CD4-positive, alpha-beta T cell (primary cell): ENCODE measurements at regions of chr3 and their contacts with region 1.

Region 1: GRCh38 chr3:179015551-179016020 is 56.0 kb downstream of the ZMAT3 start:
- DNase-seq: peak in 12 of 14 experiments; percentile 6 to 90 (median 58)
- ATAC-seq: peak; percentile 98
- H3K4me3 ChIP-seq: no peak overlapping the region
- H3K4me3 Mint-ChIP-seq: no peak overlapping the region
- H3K27ac ChIP-seq: no peak overlapping the region
- H3K27ac Mint-ChIP-seq: peak overlapping the region; percentile 31
- H3K4me1 ChIP-seq: peaks cover 4% of the 10 kb centered on the region
- H3K4me1 Mint-ChIP-seq: peaks cover 45% of the 10 kb centered on the region
- H3K27me3 ChIP-seq: no peaks in the 10 kb centered on the region
- H3K27me3 Mint-ChIP-seq: no peaks in the 10 kb centered on the region
- CTCF ChIP-seq: peak; percentile 88

Region 2: DNA sequence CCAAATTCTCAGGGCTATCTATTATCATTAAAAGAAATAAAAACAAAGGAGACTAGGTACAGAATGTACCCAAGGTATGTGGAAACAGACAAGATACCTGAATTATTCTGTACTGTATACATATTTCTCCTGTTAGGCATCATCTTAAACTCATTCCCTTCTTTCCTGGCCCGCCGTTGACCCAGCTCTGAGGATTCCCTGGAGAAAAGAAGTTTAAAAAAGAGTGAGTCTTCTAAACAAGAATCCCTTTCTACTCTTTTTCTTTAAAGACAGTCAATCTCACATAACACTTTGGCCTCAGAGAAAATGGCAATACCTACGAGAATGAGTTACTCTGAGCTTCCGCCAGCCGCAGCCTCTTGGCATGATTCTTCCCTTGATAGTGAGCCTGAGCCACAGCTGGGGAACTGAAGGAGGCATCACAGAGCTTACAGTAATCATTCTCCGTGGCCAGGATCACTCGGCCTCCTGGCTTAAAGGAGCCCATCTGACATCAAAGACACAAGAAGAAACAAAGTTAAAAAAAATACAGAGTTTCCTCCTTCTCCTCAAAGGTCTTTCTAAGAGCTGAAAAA is 11.8 kb after region 1 on chr3:
- CTCF ChIA-PET with region 1: interaction called, 8 read pairs
- POLR2A ChIA-PET with region 1: interaction called, 12 read pairs
- intact Hi-C with region 1: no loop called
- DNase-seq: peak in 6 of 14 experiments; percentile 6 to 45 (median 32)
- ATAC-seq: peak; percentile 77
- H3K4me3 ChIP-seq: no peak overlapping the region
- H3K4me3 Mint-ChIP-seq: peak overlapping the region; percentile 71
- H3K27ac ChIP-seq: peak overlapping the region; percentile 13 to 44
- H3K27ac Mint-ChIP-seq: peak overlapping the region; percentile 87
- H3K4me1 ChIP-seq: peaks cover 9% of the 10 kb centered on the region
- H3K4me1 Mint-ChIP-seq: peaks cover 28% of the 10 kb centered on the region
- H3K27me3 ChIP-seq: no peaks in the 10 kb centered on the region
- H3K27me3 Mint-ChIP-seq: no peaks in the 10 kb centered on the region
- CTCF ChIP-seq: no peak

Region 3: GRCh38 chr3:179071550-179072397 is 56.2 kb after region 1 on chr3 and contains the start of gene ZMAT3:
- CTCF ChIA-PET with region 1: interaction called, 4 read pairs
- POLR2A ChIA-PET with region 1: interaction called, 14 read pairs
- intact Hi-C with region 1: loop called (anchors 2 kb)
- DNase-seq: peak; percentile 72 to 94 (median 81)
- ATAC-seq: peak; percentile 81
- H3K4me3 ChIP-seq: peak within 1 kb of the TSS; percentile 78
- H3K4me3 Mint-ChIP-seq: peak within 1 kb of the TSS; percentile 99
- H3K27ac ChIP-seq: peak within 1 kb of the TSS; percentile 76 to 92
- H3K27ac Mint-ChIP-seq: peak within 1 kb of the TSS; percentile 86
- H3K4me1 ChIP-seq: peaks cover 30% of the 10 kb centered on the region
- H3K4me1 Mint-ChIP-seq: peaks cover 69% of the 10 kb centered on the region
- H3K27me3 ChIP-seq: no peaks in the 10 kb centered on the region
- H3K27me3 Mint-ChIP-seq: no peaks in the 10 kb centered on the region
- CTCF ChIP-seq: no peak
- total RNA-seq, gene ZMAT3: 10.2 to 13.0 TPM

Region 4: GRCh38 chr3:179196098-179196497 is 180.5 kb after region 1 on chr3:
- CTCF ChIA-PET with region 1: no interaction called
- POLR2A ChIA-PET with region 1: no interaction called
- intact Hi-C with region 1: loop called (anchors 10 kb)
- DNase-seq: peak in 4 of 14 experiments; percentile 9 to 72 (median 66)
- ATAC-seq: peak; percentile 85
- H3K4me3 ChIP-seq: no peak overlapping the region
- H3K4me3 Mint-ChIP-seq: peak overlapping the region; percentile 54
- H3K27ac ChIP-seq: no peak overlapping the region
- H3K27ac Mint-ChIP-seq: peak overlapping the region; percentile 81
- H3K4me1 ChIP-seq: peaks cover 13% of the 10 kb centered on the region
- H3K4me1 Mint-ChIP-seq: peaks cover 65% of the 10 kb centered on the region
- H3K27me3 ChIP-seq: no peaks in the 10 kb centered on the region
- H3K27me3 Mint-ChIP-seq: no peaks in the 10 kb centered on the region
- CTCF ChIP-seq: no peak

Region 5: GRCh38 chr3:179488213-179488612 is 472.6 kb after region 1 on chr3:
- CTCF ChIA-PET with region 1: no interaction called
- POLR2A ChIA-PET with region 1: no interaction called
- intact Hi-C with region 1: no loop called
- DNase-seq: no peak
- ATAC-seq: no peak
- H3K4me3 ChIP-seq: no peak overlapping the region
- H3K4me3 Mint-ChIP-seq: no peak overlapping the region
- H3K27ac ChIP-seq: no peak overlapping the region
- H3K27ac Mint-ChIP-seq: no peak overlapping the region
- H3K4me1 ChIP-seq: no peaks in the 10 kb centered on the region
- H3K4me1 Mint-ChIP-seq: no peaks in the 10 kb centered on the region
- H3K27me3 ChIP-seq: peaks cover 2 to 6% of the 10 kb centered on the region in 2 experiments
- H3K27me3 Mint-ChIP-seq: peaks cover 12% of the 10 kb centered on the region
- CTCF ChIP-seq: no peak

Region 6: GRCh38 chr3:179562591-179563270 is 547.1 kb after region 1 on chr3 and contains the start of gene ACTL6A:
- CTCF ChIA-PET with region 1: interaction called, 3 read pairs
- POLR2A ChIA-PET with region 1: no interaction called
- intact Hi-C with region 1: loop called (anchors 2 to 5 kb)
- DNase-seq: peak; percentile 94 to 99 (median 98)
- ATAC-seq: peak; percentile 90
- H3K4me3 ChIP-seq: peak within 1 kb of the TSS; percentile 83
- H3K4me3 Mint-ChIP-seq: peak within 1 kb of the TSS; percentile 91
- H3K27ac ChIP-seq: peak within 1 kb of the TSS; percentile 38 to 57
- H3K27ac Mint-ChIP-seq: peak within 1 kb of the TSS; percentile 85
- H3K4me1 ChIP-seq: peaks cover 31% of the 10 kb centered on the region
- H3K4me1 Mint-ChIP-seq: peaks cover 30% of the 10 kb centered on the region
- H3K27me3 ChIP-seq: no peaks in the 10 kb centered on the region
- H3K27me3 Mint-ChIP-seq: peaks cover 5% of the 10 kb centered on the region
- CTCF ChIP-seq: no peak
- total RNA-seq, gene ACTL6A: 19.0 to 19.3 TPM